SK-N-SH (cell line): ENCODE measurements at regions of chr11 and their contacts with region 1.

Region 1: DNA sequence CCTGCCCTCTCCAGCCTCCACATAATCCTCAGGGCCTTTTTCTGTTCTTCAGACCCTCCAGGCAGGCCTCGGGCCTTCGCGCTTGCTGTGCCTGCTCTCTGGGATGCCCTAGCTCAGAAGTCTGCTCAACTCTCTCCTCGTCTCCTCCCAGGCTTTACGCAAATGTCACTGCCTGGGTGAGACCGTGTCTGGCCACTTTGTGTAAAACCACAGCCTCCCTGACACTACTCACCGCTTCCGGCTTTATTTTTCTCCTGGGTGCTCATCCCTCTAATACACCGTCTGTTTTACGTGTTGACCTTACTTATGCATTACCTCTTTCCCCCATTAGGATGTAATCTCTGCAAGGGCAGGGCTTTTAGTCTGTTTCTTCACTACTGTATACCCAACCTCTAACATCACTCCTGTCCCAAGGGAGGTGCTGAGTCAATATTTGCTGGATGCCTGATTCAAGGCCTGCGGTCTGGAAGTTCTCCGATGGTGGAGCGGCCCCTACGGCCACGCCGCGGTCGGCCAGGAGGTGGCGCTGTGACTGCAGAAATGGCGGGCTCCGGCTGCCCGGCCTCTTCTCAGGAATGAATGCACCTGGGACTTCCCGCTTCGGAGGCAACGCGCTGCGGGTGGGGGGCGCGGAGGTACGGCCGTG is 58.2 kb upstream of the THY1 start:
- DNase-seq: peak; percentile 92
- H3K4me3 ChIP-seq: peak overlapping the region in 1 of 2 experiments; percentile 53; a peak in 1 of 4 replicates
- H3K27ac ChIP-seq: no peak overlapping the region
- H3K4me1 ChIP-seq: peaks cover 0 to 5% of the 10 kb centered on the region in 2 experiments; a peak in 1 of 4 replicates
- H3K27me3 ChIP-seq: peaks cover 6% of the 10 kb centered on the region; the same call in 1 of the 2 replicates
- CTCF ChIP-seq: peak; percentile 97
- EP300 ChIP-seq: no peak
- RAD21 ChIP-seq: peak; percentile 95

Region 2: GRCh38 chr11:119381181-119381988 is 99.8 kb before region 1 on chr11 and contains the start of gene USP2:
- CTCF ChIA-PET with region 1: interaction called, 390 read pairs
- POLR2A ChIA-PET with region 1: no interaction called
- DNase-seq: peak; percentile 96
- H3K4me3 ChIP-seq: peak within 1 kb of the TSS; percentile 57 to 62
- H3K27ac ChIP-seq: peak within 1 kb of the TSS in 1 of 2 experiments; percentile 31; a peak in 1 of 4 replicates
- H3K4me1 ChIP-seq: peaks cover 4 to 42% of the 10 kb centered on the region in 2 experiments; a peak in 3 of 4 replicates
- H3K27me3 ChIP-seq: no peaks in the 10 kb centered on the region
- CTCF ChIP-seq: peak; percentile 83
- EP300 ChIP-seq: no peak
- RAD21 ChIP-seq: peak; percentile 70
- polyA plus RNA-seq, gene USP2: 0.81 and 0.97 TPM in 2 replicates

Region 3: GRCh38 chr11:119491753-119492510 is 10.8 kb after region 1 on chr11:
- CTCF ChIA-PET with region 1: interaction called, 14 read pairs
- POLR2A ChIA-PET with region 1: no interaction called
- DNase-seq: no peak
- H3K4me3 ChIP-seq: no peak overlapping the region
- H3K27ac ChIP-seq: no peak overlapping the region
- H3K4me1 ChIP-seq: peaks cover 0 to 8% of the 10 kb centered on the region in 2 experiments; a peak in 1 of 4 replicates
- H3K27me3 ChIP-seq: peaks cover 10% of the 10 kb centered on the region; the same call in 1 of the 2 replicates
- CTCF ChIP-seq: peak; percentile 47
- EP300 ChIP-seq: no peak
- RAD21 ChIP-seq: peak; percentile 14; the same call in 1 of the 2 replicates